Activated T-helper 2 cell treated with anti-CD3 and anti-CD28 coated beads, Interferon-gamma antibody, Interleukin-2, Interleukin-4, amounts not matched to agents 10 μg/mL and 5 μg/mL and 100 μg/mL, durations not matched to agents 14 hours and 24 hours and 36 hours (primary cell): ENCODE measurements at regions of chr21 and their contacts with region 1.

Region 1: DNA sequence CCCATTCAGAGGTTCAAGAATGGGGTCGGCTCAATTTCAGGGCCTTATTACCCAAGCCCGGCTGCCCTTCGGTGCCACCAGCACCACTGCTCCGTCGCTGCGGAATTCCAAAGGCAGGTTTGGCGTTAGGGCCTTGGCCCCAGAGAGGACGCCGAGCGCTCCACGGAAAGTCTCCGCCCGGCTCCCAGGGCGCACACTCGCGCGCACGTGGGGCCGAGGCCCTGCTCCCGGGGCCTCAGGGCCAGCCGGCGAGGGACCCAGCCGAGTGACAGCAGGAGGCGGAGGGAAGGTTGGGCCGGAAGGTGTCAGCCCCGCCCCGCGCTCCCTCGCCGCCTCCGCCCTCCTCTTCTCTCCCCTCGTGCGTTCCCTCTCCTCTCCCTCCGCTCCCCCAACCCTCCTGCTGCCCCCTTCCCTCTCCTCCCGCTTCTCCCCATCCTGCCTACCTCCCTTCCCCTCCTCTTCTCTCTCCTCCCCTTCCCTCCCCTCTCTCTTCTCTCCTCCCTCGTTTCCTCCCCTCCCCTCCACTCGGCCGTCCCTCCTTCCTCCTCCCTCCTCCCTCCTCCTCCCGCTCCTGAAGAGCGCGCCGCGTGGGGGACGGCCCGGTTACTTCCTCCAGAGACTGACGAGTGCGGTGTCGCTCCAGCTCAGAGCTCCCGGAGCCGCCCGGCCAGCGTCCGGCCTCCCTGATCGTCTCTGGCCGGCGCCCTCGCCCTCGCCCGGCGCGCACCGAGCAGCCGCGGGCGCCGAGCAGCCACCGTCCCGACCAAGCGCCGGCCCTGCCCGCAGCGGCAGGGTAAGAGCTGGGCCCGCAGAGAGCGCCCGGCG is at the start of gene ETS2:
- DNase-seq: peak; percentile 73
- H3K4me3 Mint-ChIP-seq: peak within 1 kb of the TSS; percentile 94
- H3K27ac Mint-ChIP-seq: peak within 1 kb of the TSS; percentile 93
- H3K4me1 Mint-ChIP-seq: peaks cover 49% of the 10 kb centered on the region
- H3K27me3 Mint-ChIP-seq: no peaks in the 10 kb centered on the region
- total RNA-seq, gene ETS2: 62.8 and 63.9 TPM in 2 replicates

Region 2: DNA sequence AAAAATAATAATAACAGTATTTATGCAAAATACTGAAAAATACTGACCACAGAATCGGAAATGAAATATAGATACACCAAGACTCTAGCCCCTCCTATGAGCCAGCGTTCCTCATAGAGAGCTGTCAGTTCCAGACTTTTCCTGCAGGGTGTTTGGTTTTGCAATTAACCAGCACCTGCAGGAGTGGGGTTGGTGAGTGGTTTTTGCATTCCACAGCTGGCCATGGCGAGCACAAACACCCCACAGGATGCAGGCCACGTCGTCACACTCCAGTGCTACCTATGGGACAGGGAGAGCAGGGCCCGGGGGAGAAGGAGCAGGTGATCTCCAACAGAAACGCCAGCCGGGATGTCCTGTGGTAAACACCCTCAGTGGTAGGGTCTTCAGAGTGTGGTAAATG is 401.4 kb before region 1 on chr21:
- intact Hi-C with region 1: no loop called
- DNase-seq: no peak
- H3K4me3 Mint-ChIP-seq: no peak overlapping the region
- H3K27ac Mint-ChIP-seq: no peak overlapping the region
- H3K4me1 Mint-ChIP-seq: no peaks in the 10 kb centered on the region
- H3K27me3 Mint-ChIP-seq: peaks cover 24% of the 10 kb centered on the region

Region 3: DNA sequence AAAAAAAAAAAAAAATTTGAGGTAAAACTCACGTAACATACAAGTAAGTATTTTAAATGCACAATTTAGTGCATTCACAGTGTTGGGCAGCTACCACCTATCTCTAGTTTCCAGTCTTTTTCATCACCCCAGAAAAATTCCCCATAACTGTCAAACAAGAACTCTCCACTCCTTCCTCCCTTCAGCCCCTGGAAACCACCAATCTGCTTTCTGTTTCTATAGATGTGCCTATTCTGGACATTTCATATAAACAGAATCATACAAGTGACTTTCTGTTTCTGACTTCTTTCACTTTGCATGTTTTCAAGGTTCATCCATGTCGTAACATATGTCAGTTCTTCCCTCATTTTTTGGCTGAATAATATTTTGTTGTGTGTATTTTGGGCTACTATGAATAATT is 24.7 kb before region 1 on chr21:
- intact Hi-C with region 1: loop called (anchors 1 kb)
- DNase-seq: peak; percentile 20
- H3K4me3 Mint-ChIP-seq: peak overlapping the region; percentile 23
- H3K27ac Mint-ChIP-seq: peak overlapping the region; percentile 70
- H3K4me1 Mint-ChIP-seq: peaks cover 45% of the 10 kb centered on the region
- H3K27me3 Mint-ChIP-seq: no peaks in the 10 kb centered on the region

Region 4: GRCh38 chr21:38839328-38840286 is 34.1 kb after region 1 on chr21:
- intact Hi-C with region 1: loop called (anchors 2 kb)
- DNase-seq: no peak
- H3K4me3 Mint-ChIP-seq: no peak overlapping the region
- H3K27ac Mint-ChIP-seq: peak overlapping the region; percentile 65
- H3K4me1 Mint-ChIP-seq: peaks cover 36% of the 10 kb centered on the region
- H3K27me3 Mint-ChIP-seq: no peaks in the 10 kb centered on the region

Region 5: GRCh38 chr21:38958940-38959691 is 153.6 kb after region 1 on chr21:
- intact Hi-C with region 1: loop called (anchors 1 kb)
- DNase-seq: no peak
- H3K4me3 Mint-ChIP-seq: peak overlapping the region; percentile 61
- H3K27ac Mint-ChIP-seq: peak overlapping the region; percentile 96
- H3K4me1 Mint-ChIP-seq: peaks cover 64% of the 10 kb centered on the region
- H3K27me3 Mint-ChIP-seq: no peaks in the 10 kb centered on the region

Region 6: GRCh38 chr21:38985568-38986378 is 180.2 kb after region 1 on chr21:
- intact Hi-C with region 1: loop called (anchors 2 kb)
- DNase-seq: peak; percentile 72
- H3K4me3 Mint-ChIP-seq: peak overlapping the region; percentile 65
- H3K27ac Mint-ChIP-seq: peak overlapping the region; percentile 97
- H3K4me1 Mint-ChIP-seq: peaks cover 67% of the 10 kb centered on the region
- H3K27me3 Mint-ChIP-seq: no peaks in the 10 kb centered on the region

Region 7: GRCh38 chr21:39137248-39138178 is 332.0 kb after region 1 on chr21:
- intact Hi-C with region 1: loop called (anchors 5 kb)
- DNase-seq: no peak
- H3K4me3 Mint-ChIP-seq: no peak overlapping the region
- H3K27ac Mint-ChIP-seq: no peak overlapping the region
- H3K4me1 Mint-ChIP-seq: peaks cover 7% of the 10 kb centered on the region
- H3K27me3 Mint-ChIP-seq: peaks cover 1% of the 10 kb centered on the region